Right lobe of liver (tissue), 6 donors: ENCODE measurements at regions of chr2 and their contacts with region 1.

Region 1: GRCh38 chr2:191501561-191502168 is 176.3 kb upstream of the NABP1 start:
- DNase-seq: no peak
- ATAC-seq: peak; percentile 65 to 79 (median 68)
- H3K4me3 ChIP-seq: no peak overlapping the region
- H3K27ac ChIP-seq: no peak overlapping the region
- H3K4me1 ChIP-seq: no peaks in the 10 kb centered on the region
- H3K27me3 ChIP-seq: no peaks in the 10 kb centered on the region
- CTCF ChIP-seq: peak; percentile 50 to 60 (median 58)
- POLR2A ChIP-seq: no peak

Region 2: GRCh38 chr2:191165176-191165643 is 336.5 kb before region 1 on chr2:
- intact Hi-C with region 1: loop called in 1 of 2 experiments (anchors 10 kb)
- DNase-seq: no peak
- ATAC-seq: peak; percentile 59 to 82 (median 72)
- H3K4me3 ChIP-seq: no peak overlapping the region
- H3K27ac ChIP-seq: peak overlapping the region in 2 of 3 donors; percentile 19 to 78
- H3K4me1 ChIP-seq: peaks cover 0 to 55% (median 18%) of the 10 kb centered on the region in 4 donors
- H3K27me3 ChIP-seq: no peaks in the 10 kb centered on the region
- CTCF ChIP-seq: peak; percentile 59 to 68 (median 65)
- POLR2A ChIP-seq: no peak

Region 3: DNA sequence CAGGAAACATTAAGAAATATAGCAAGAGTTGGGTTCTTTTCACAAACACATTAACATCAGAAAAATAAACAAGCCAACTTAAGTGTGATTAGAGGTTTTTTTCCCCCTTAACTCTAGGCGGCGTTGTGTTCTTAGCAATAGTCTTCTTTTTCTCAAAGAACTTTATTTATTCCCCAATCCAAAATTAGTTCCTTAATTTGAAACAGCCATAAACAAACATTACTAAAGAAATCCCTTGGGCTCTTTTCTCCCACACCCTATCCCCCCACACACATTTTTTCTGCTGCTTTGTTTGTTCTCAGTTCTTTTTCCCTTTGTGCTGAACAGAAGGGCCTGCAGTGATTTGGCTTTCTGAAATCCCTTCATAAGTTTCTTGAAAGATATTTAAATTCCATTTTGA is 269.7 kb before region 1 on chr2:
- intact Hi-C with region 1: loop called in 1 of 2 experiments (anchors 10 kb)
- DNase-seq: no peak
- ATAC-seq: peak in 3 of 4 donors; percentile 18 to 48 (median 45)
- H3K4me3 ChIP-seq: no peak overlapping the region
- H3K27ac ChIP-seq: no peak overlapping the region
- H3K4me1 ChIP-seq: no peaks in the 10 kb centered on the region
- H3K27me3 ChIP-seq: no peaks in the 10 kb centered on the region
- CTCF ChIP-seq: peak; percentile 25 to 42 (median 40)
- POLR2A ChIP-seq: no peak

Region 4: DNA sequence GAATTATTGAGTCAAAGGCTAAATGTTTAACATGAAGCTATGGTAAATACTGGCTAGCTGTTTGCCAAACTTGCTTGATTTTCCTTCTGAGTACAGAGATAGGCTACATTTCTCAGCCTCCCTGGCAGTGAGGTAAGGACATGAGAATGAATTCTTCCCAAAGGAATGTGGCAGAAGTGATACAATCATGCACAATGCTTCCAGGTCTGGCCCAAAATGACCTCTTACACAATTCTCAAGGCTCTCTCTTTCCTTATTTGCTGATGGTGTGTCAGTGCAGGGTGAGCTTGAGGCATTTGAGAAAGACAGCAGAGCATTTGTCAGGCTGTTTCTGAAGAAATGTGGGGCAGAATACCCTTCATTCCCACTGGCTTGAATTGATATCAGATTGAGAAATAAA is 80.7 kb after region 1 on chr2:
- intact Hi-C with region 1: no loop called
- DNase-seq: no peak
- ATAC-seq: no peak
- H3K4me3 ChIP-seq: no peak overlapping the region
- H3K27ac ChIP-seq: no peak overlapping the region
- H3K4me1 ChIP-seq: no peaks in the 10 kb centered on the region
- H3K27me3 ChIP-seq: no peaks in the 10 kb centered on the region
- CTCF ChIP-seq: no peak
- POLR2A ChIP-seq: no peak